ENCODE measurements at regions of chr10 and their contacts with region 1.

Region 1: GRCh38 chr10:15744217-15744865 is 24.6 kb upstream of the ITGA8 start:
- DNase-seq: no peak
- ATAC-seq: peak; percentile 88
- H3K4me3 ChIP-seq: no peak overlapping the region
- H3K27ac ChIP-seq: no peak overlapping the region
- H3K4me1 ChIP-seq: no peaks in the 10 kb centered on the region
- H3K27me3 ChIP-seq: no peaks in the 10 kb centered on the region
- CTCF ChIP-seq: peak; percentile 48 to 73 (median 55)
- EP300 ChIP-seq: no peak
- POLR2A ChIP-seq: no peak
- RAD21 ChIP-seq: peak; percentile 48; the same call in 1 of the 2 replicates

Region 2: DNA sequence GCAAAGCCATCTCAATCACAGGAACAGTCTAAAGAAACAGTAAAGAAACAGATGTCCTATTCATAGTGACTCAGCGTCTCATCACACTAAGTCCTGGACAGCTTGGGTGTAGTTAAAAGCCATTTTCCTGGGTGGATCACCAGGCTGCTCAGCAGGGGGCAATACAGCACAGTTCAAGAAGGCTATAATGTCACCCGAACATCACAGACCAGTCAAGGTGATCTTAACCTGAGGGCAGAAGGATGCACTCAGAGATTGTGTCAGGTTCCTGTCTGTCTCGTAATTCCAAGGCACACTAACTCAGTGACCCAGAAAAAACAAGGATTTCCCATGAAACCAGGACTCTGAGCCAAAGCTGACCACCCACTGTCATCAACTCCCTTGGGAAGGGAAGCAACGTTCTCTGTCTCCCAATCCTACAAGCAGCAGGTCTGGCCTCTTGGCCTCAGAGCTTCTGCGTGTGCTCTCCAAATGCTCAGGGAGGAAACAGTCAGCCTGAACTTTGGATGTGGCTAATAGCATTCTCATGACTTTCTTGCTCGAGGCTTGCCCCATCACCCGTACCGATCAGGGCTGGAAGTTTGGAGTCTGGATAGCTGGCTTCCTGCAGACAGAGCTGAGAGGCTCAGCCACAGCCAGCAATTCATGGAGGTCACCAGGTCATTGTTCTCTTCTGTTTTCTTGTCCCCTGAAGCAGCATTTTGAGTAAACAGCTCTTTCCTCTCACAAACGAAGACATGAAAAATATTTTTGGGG is 282.8 kb before region 1 on chr10:
- CTCF ChIA-PET with region 1: no interaction called
- POLR2A ChIA-PET with region 1: no interaction called
- RAD21 ChIA-PET with region 1: no interaction called
- SMC1A ChIA-PET with region 1: no interaction called
- in situ Hi-C with region 1: no loop called
- intact Hi-C with region 1: no loop called
- DNase-seq: no peak
- ATAC-seq: no peak
- H3K4me3 ChIP-seq: no peak overlapping the region
- H3K27ac ChIP-seq: no peak overlapping the region
- H3K4me1 ChIP-seq: no peaks in the 10 kb centered on the region
- H3K27me3 ChIP-seq: no peaks in the 10 kb centered on the region; a peak in 1 of 4 replicates
- CTCF ChIP-seq: peak in 1 of 3 experiments; percentile 19; a peak in 1 of 6 replicates
- EP300 ChIP-seq: no peak
- POLR2A ChIP-seq: no peak
- RAD21 ChIP-seq: peak; percentile 38

Region 3: GRCh38 chr10:15652117-15652516 is 92.2 kb before region 1 on chr10:
- CTCF ChIA-PET with region 1: no interaction called
- POLR2A ChIA-PET with region 1: no interaction called
- RAD21 ChIA-PET with region 1: interaction called, 3 read pairs
- SMC1A ChIA-PET with region 1: no interaction called
- in situ Hi-C with region 1: no loop called
- intact Hi-C with region 1: loop called (anchors 5 kb)
- DNase-seq: no peak
- ATAC-seq: no peak
- H3K4me3 ChIP-seq: no peak overlapping the region
- H3K27ac ChIP-seq: no peak overlapping the region
- H3K4me1 ChIP-seq: no peaks in the 10 kb centered on the region
- H3K27me3 ChIP-seq: no peaks in the 10 kb centered on the region; a peak in 1 of 4 replicates
- CTCF ChIP-seq: no peak
- EP300 ChIP-seq: no peak
- POLR2A ChIP-seq: no peak
- RAD21 ChIP-seq: no peak

Region 4: GRCh38 chr10:15852111-15852557 is 107.8 kb after region 1 on chr10:
- CTCF ChIA-PET with region 1: no interaction called
- POLR2A ChIA-PET with region 1: no interaction called
- RAD21 ChIA-PET with region 1: no interaction called
- SMC1A ChIA-PET with region 1: no interaction called
- in situ Hi-C with region 1: no loop called
- intact Hi-C with region 1: no loop called
- DNase-seq: no peak
- ATAC-seq: no peak
- H3K4me3 ChIP-seq: no peak overlapping the region
- H3K27ac ChIP-seq: no peak overlapping the region
- H3K4me1 ChIP-seq: no peaks in the 10 kb centered on the region
- H3K27me3 ChIP-seq: no peaks in the 10 kb centered on the region
- CTCF ChIP-seq: no peak
- EP300 ChIP-seq: no peak
- POLR2A ChIP-seq: no peak
- RAD21 ChIP-seq: no peak

Region 5: DNA sequence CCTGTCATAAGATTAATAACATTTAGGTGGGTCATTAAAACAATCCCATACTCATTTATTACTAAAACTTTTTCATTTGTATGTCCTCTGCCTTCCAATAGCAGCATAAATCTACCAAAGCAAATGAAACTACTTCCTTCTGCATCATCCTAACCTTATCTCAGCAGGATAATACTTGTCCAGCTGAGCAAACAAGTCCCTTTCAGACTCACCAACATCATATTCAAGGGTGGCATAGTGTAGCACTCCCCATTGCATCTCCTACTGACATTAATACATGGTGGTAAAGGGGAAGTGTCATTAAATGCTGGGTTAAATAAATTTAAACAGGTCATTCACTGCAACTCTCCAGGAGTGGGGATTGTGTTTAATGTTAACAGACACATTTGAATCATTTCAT is 119.4 kb after region 1 on chr10:
- CTCF ChIA-PET with region 1: no interaction called
- POLR2A ChIA-PET with region 1: no interaction called
- RAD21 ChIA-PET with region 1: no interaction called
- SMC1A ChIA-PET with region 1: no interaction called
- in situ Hi-C with region 1: no loop called
- intact Hi-C with region 1: no loop called
- DNase-seq: no peak
- ATAC-seq: no peak
- H3K4me3 ChIP-seq: no peak overlapping the region
- H3K27ac ChIP-seq: no peak overlapping the region
- H3K4me1 ChIP-seq: peaks cover 3% of the 10 kb centered on the region; the same call in 1 of the 2 replicates
- H3K27me3 ChIP-seq: no peaks in the 10 kb centered on the region
- CTCF ChIP-seq: no peak
- EP300 ChIP-seq: no peak
- POLR2A ChIP-seq: no peak
- RAD21 ChIP-seq: no peak

Region 6: DNA sequence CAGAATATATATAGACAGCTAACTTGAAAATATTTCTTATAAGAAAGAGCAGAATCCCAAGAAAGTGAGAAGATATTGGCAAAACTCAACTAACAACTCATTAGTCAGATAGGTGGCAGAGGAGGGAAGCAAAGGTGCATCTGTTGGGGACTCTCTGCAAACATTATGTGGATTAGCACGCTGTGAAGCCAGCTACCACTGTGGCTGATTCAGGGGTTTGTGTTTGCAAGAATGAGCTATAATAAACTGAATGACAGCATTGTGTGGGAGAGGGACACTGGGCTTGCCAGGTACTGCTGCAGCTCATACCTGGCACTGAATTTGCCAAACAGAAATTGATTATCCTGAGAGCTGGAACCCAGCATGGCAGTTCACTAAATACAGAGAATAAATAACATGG is 286.2 kb after region 1 on chr10:
- CTCF ChIA-PET with region 1: no interaction called
- POLR2A ChIA-PET with region 1: no interaction called
- RAD21 ChIA-PET with region 1: no interaction called
- SMC1A ChIA-PET with region 1: no interaction called
- in situ Hi-C with region 1: no loop called
- intact Hi-C with region 1: no loop called
- DNase-seq: no peak
- ATAC-seq: no peak
- H3K4me3 ChIP-seq: no peak overlapping the region
- H3K27ac ChIP-seq: no peak overlapping the region
- H3K4me1 ChIP-seq: no peaks in the 10 kb centered on the region
- H3K27me3 ChIP-seq: no peaks in the 10 kb centered on the region
- CTCF ChIP-seq: no peak
- EP300 ChIP-seq: no peak
- POLR2A ChIP-seq: no peak
- RAD21 ChIP-seq: no peak